ENCODE measurements at regions of chr11 and their contacts with region 1.

Region 1: GRCh38 chr11:25667871-25668270 is 664.1 kb upstream of the ANO3 start:
- H3K4me3 Mint-ChIP-seq: no peak overlapping the region
- H3K27ac Mint-ChIP-seq: no peak overlapping the region
- H3K4me1 Mint-ChIP-seq: no peaks in the 10 kb centered on the region
- H3K27me3 Mint-ChIP-seq: no peaks in the 10 kb centered on the region

Region 2: GRCh38 chr11:25758145-25758661 is 90.3 kb after region 1 on chr11:
- intact Hi-C with region 1: loop called (anchors 10 kb)
- H3K4me3 Mint-ChIP-seq: no peak overlapping the region
- H3K27ac Mint-ChIP-seq: no peak overlapping the region
- H3K4me1 Mint-ChIP-seq: no peaks in the 10 kb centered on the region
- H3K27me3 Mint-ChIP-seq: no peaks in the 10 kb centered on the region

Region 3: GRCh38 chr11:26418386-26418912 is 750.6 kb after region 1 on chr11:
- intact Hi-C with region 1: no loop called
- H3K4me3 Mint-ChIP-seq: no peak overlapping the region
- H3K27ac Mint-ChIP-seq: no peak overlapping the region
- H3K4me1 Mint-ChIP-seq: no peaks in the 10 kb centered on the region
- H3K27me3 Mint-ChIP-seq: no peaks in the 10 kb centered on the region